Activated CD4-positive, alpha-beta memory T cell treated with anti-CD3 and anti-CD28 coated beads, Interleukin-2, amount 10 ng/mL, durations not matched to agents 7 days and 5 days (primary cell): ENCODE measurements at regions of chr10 and their contacts with region 1.

Region 1: GRCh38 chr10:72273410-72274212 is at the start of gene DDIT4:
- DNase-seq: peak; percentile 99
- H3K4me3 Mint-ChIP-seq: peak within 1 kb of the TSS; percentile 100
- H3K27ac Mint-ChIP-seq: peak within 1 kb of the TSS; percentile 96
- H3K4me1 Mint-ChIP-seq: peaks cover 58% of the 10 kb centered on the region
- H3K27me3 Mint-ChIP-seq: no peaks in the 10 kb centered on the region
- total RNA-seq, gene DDIT4: 475 to 481 TPM

Region 2: GRCh38 chr10:72126184-72126871 is 147.3 kb before region 1 on chr10:
- CTCF ChIA-PET with region 1: interaction called, 12 read pairs
- POLR2A ChIA-PET with region 1: no interaction called
- DNase-seq: no peak
- H3K4me3 Mint-ChIP-seq: no peak overlapping the region
- H3K27ac Mint-ChIP-seq: no peak overlapping the region
- H3K4me1 Mint-ChIP-seq: peaks cover 28% of the 10 kb centered on the region
- H3K27me3 Mint-ChIP-seq: no peaks in the 10 kb centered on the region

Region 3: GRCh38 chr10:72146071-72146470 is 127.5 kb before region 1 on chr10:
- CTCF ChIA-PET with region 1: no interaction called
- POLR2A ChIA-PET with region 1: no interaction called
- DNase-seq: no peak
- H3K4me3 Mint-ChIP-seq: no peak overlapping the region
- H3K27ac Mint-ChIP-seq: no peak overlapping the region
- H3K4me1 Mint-ChIP-seq: peaks cover 11% of the 10 kb centered on the region
- H3K27me3 Mint-ChIP-seq: no peaks in the 10 kb centered on the region

Region 4: GRCh38 chr10:72223743-72224101 is 49.9 kb before region 1 on chr10:
- CTCF ChIA-PET with region 1: interaction called, 10 read pairs
- POLR2A ChIA-PET with region 1: interaction called, 6 read pairs
- DNase-seq: no peak
- H3K4me3 Mint-ChIP-seq: no peak overlapping the region
- H3K27ac Mint-ChIP-seq: peak overlapping the region; percentile 58
- H3K4me1 Mint-ChIP-seq: peaks cover 52% of the 10 kb centered on the region
- H3K27me3 Mint-ChIP-seq: no peaks in the 10 kb centered on the region

Region 5: GRCh38 chr10:72254813-72255568 is 18.6 kb before region 1 on chr10:
- CTCF ChIA-PET with region 1: interaction called, 33 read pairs
- POLR2A ChIA-PET with region 1: interaction called, 145 read pairs
- DNase-seq: peak; percentile 50
- H3K4me3 Mint-ChIP-seq: peak overlapping the region; percentile 48
- H3K27ac Mint-ChIP-seq: peak overlapping the region; percentile 78
- H3K4me1 Mint-ChIP-seq: peaks cover 73% of the 10 kb centered on the region
- H3K27me3 Mint-ChIP-seq: no peaks in the 10 kb centered on the region

Region 6: DNA sequence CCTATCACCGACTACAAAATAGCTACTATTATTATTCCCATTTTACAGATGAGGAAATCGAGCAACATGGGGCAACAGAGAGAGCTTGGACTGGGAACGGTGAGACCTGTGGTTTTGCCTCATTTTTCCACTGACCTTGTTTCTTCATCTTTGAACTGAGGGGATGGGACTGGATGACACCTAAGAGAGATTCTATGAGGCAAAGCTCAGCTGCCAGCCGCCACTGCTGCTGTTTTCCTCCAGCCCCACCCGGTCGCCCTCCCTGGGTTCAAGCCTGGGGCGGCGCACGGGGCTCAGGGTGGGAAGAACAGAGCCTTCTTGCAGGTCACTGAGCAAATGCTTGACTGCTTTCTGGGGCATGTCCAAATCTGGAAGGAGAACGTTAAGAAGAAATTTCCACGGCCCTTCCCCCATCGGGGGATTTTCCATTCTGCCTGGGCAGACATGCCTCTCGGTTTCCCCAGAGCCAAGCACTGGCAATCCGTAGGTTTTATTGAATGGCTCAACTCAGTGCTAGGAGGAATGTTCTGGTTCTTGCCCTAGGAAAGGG is 12.4 kb after region 1 on chr10:
- CTCF ChIA-PET with region 1: interaction called, 56 read pairs
- POLR2A ChIA-PET with region 1: interaction called, 73 read pairs
- DNase-seq: no peak
- H3K4me3 Mint-ChIP-seq: no peak overlapping the region
- H3K27ac Mint-ChIP-seq: peak overlapping the region; percentile 49
- H3K4me1 Mint-ChIP-seq: peaks cover 42% of the 10 kb centered on the region
- H3K27me3 Mint-ChIP-seq: no peaks in the 10 kb centered on the region

Region 7: GRCh38 chr10:72297968-72298773 is 24.6 kb after region 1 on chr10:
- CTCF ChIA-PET with region 1: interaction called, 56 read pairs
- POLR2A ChIA-PET with region 1: interaction called, 79 read pairs
- DNase-seq: peak; percentile 96
- H3K4me3 Mint-ChIP-seq: peak overlapping the region; percentile 73
- H3K27ac Mint-ChIP-seq: peak overlapping the region; percentile 97
- H3K4me1 Mint-ChIP-seq: peaks cover 66% of the 10 kb centered on the region
- H3K27me3 Mint-ChIP-seq: no peaks in the 10 kb centered on the region

Region 8: GRCh38 chr10:72319416-72320254 is 46.0 kb after region 1 on chr10:
- CTCF ChIA-PET with region 1: interaction called, 32 read pairs
- POLR2A ChIA-PET with region 1: interaction called, 104 read pairs
- DNase-seq: peak; percentile 92
- H3K4me3 Mint-ChIP-seq: peak overlapping the region; percentile 76
- H3K27ac Mint-ChIP-seq: peak overlapping the region; percentile 98
- H3K4me1 Mint-ChIP-seq: peaks cover 81% of the 10 kb centered on the region
- H3K27me3 Mint-ChIP-seq: no peaks in the 10 kb centered on the region